OCI-LY7 (cell line): ENCODE measurements at regions of chr16 and their contacts with region 1.

Region 1: DNA sequence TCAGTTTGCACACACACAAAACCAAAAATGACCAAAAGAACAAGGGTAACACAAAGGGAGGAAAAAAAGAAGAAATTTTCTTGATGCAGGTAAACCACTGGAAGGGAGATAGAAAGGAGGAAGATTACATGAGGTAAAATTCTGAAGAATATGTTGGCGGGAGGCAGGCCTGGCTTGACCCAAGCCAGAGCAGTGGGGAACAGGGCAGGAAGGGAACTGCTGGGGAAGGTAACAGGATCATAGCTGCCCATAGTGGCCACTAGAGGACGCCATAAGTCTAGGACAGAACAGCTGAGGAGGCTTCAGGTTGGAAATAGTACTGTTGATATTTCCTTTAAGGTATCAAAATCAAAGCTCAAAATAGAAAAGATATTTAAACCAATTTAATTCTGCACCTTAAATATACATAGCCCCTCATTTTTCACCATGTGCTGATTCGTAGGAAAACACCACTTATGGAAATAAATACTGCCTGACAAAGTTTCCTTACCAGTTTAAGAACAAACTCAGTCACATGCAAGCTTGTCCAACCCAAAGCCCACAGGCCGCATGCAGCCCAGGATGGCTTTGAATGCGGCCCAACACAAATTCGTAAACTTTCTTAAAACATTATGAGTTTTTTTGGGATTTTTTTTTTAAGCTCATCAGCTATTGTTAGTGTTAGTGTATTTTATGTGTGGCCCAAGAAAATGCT is 15.5 kb downstream of the VPS35 start:
- DNase-seq: peak; percentile 78
- H3K4me3 ChIP-seq: no peak overlapping the region
- H3K27ac ChIP-seq: no peak overlapping the region
- H3K4me1 ChIP-seq: no peaks in the 10 kb centered on the region
- CTCF ChIP-seq: peak; percentile 99

Region 2: DNA sequence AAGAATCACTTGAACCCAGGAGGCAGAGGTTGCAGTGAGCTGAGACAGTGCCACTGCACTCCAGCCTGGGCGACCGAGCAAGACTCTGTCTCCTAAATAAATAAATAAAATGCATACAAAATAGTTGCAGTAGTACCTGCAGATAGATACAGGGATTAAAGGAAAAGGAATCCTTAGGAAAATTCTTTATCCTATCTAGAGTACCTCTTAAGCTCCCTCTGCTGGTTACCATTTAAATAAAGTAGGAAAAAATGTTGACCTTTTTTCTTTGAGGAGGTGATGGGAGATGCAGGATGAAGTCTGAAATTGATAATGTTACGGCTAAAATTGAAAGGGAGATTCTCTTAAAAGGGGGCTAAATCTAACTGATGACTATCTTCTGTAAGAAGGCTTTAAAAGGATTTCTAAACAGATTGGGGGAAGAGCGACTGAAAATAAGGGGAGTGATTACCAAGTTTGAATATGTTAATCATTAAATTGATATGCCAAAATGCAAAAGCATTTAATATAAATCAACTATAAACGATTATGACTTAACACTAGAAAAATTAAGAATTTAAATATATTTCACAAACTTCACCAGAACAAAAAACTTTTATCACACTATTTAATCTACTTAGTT is 128.1 kb after region 1 on chr16:
- CTCF ChIA-PET with region 1: no interaction called
- POLR2A ChIA-PET with region 1: no interaction called
- intact Hi-C with region 1: loop called (anchors 5 kb)
- DNase-seq: no peak
- H3K4me3 ChIP-seq: no peak overlapping the region
- H3K27ac ChIP-seq: no peak overlapping the region
- H3K4me1 ChIP-seq: peaks cover 7% of the 10 kb centered on the region
- CTCF ChIP-seq: peak; percentile 71

Region 3: DNA sequence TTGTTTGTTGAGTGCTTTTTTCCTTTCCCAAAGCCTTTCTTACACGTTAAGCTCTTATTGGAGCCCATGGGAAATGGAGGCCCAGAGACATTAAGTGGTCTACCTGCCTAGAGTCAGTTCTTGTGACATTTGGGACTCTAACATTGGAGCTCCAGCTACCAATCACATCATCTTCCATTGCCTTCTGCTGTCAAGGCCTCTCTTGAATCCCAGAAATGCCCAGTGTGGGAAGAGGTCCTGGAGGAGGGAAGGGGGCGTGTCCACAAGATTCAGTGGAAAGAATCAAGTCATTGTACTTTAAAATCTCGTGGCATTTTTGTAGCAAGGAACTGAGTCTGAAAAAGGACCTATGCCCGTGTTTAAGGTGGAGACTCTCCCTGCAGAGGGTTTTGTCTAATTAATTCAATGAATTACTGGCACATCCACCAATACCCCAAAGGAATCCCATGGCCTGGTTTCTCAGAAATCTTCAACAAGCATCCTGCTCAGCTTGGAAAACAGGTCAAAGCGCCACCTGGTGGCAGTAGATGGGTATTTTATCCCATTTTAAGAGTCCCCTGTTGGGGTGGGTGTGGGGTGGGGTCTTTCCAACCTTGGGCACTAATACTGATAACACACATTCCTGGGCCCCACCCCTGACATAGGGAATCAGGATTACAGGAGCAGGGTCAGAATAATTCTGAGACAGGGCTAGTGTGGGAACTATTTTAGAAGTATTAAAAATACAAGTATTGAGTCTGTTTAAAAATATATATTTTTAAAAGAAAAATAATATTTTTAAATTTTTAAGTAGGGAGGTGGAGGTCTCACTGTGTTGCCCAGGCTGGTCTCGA is 235.3 kb after region 1 on chr16:
- CTCF ChIA-PET with region 1: interaction called, 3 read pairs
- POLR2A ChIA-PET with region 1: no interaction called
- intact Hi-C with region 1: loop called (anchors 1 kb)
- DNase-seq: peak; percentile 79
- H3K4me3 ChIP-seq: no peak overlapping the region
- H3K27ac ChIP-seq: no peak overlapping the region
- H3K4me1 ChIP-seq: peaks cover 8% of the 10 kb centered on the region
- CTCF ChIP-seq: peak; percentile 85

Region 4: GRCh38 chr16:46929378-46930332 is 256.2 kb after region 1 on chr16:
- CTCF ChIA-PET with region 1: no interaction called
- POLR2A ChIA-PET with region 1: no interaction called
- intact Hi-C with region 1: loop called (anchors 5 kb)
- DNase-seq: peak; percentile 65
- H3K4me3 ChIP-seq: no peak overlapping the region
- H3K27ac ChIP-seq: no peak overlapping the region
- H3K4me1 ChIP-seq: peaks cover 11% of the 10 kb centered on the region
- CTCF ChIP-seq: peak; percentile 96

Region 5: DNA sequence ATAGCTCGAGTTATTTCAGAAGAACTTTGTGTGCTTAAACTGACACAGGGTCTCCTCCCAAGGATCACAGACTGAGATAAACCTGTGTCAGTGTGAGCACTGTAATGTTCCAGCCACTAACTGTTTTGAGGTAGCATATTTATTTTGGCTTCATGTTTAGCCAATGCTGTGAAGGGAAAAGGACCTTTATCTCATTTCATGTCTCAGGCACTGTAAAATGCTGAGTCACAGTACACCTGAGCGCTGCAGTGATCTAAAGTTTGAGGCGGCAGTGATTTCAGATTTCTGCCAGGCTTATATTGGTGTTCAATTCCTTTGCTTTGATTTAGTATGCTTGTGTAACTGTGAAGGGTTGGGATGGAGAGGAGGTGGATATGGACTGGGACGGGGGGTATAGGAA is 303.1 kb after region 1 on chr16:
- CTCF ChIA-PET with region 1: no interaction called
- POLR2A ChIA-PET with region 1: no interaction called
- intact Hi-C with region 1: no loop called
- DNase-seq: peak; percentile 11
- H3K4me3 ChIP-seq: no peak overlapping the region
- H3K27ac ChIP-seq: no peak overlapping the region
- H3K4me1 ChIP-seq: peaks cover 29% of the 10 kb centered on the region
- CTCF ChIP-seq: no peak